Ovary (tissue), 10 donors: ENCODE measurements at regions of chr12 and their contacts with region 1.

Region 1: GRCh38 chr12:82896979-82897378 is 210.3 kb downstream of the TMTC2 start:
- DNase-seq: no peak
- H3K4me3 ChIP-seq: no peak overlapping the region
- H3K27ac ChIP-seq: no peak overlapping the region
- H3K4me1 ChIP-seq: no peaks in the 10 kb centered on the region
- H3K27me3 ChIP-seq: no peaks in the 10 kb centered on the region
- CTCF ChIP-seq: no peak
- EP300 ChIP-seq: no peak
- POLR2A ChIP-seq: no peak

Region 2: DNA sequence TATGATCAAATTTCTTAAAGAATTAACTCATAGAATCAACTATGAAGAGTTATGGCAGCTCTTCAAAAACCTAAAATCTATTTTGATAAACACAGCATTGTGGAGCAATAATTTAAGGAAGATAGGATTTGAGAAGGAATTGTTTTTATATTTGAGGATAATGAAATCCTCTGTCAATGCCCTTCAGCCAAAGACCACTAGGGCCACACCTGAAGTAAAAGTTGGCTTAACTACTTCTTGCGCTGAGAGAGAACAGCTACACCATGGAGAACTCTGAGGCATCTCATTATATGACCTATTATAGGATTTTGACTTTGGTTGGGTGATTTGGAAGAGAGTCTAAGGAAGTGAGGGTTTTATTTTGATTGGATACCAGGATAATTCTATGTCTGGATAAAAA is 27.0 kb after region 1 on chr12:
- intact Hi-C with region 1: loop called in 1 of 4 experiments (anchors 2 kb)
- DNase-seq: no peak
- H3K4me3 ChIP-seq: no peak overlapping the region
- H3K27ac ChIP-seq: no peak overlapping the region
- H3K4me1 ChIP-seq: no peaks in the 10 kb centered on the region
- H3K27me3 ChIP-seq: no peaks in the 10 kb centered on the region
- CTCF ChIP-seq: no peak
- EP300 ChIP-seq: no peak
- POLR2A ChIP-seq: no peak